Left ventricle myocardium inferior (tissue), 1 donor: ENCODE measurements at regions of chr7 and their contacts with region 1.

Region 1: GRCh38 chr7:2680792-2681490 is 7.1 kb upstream of the AMZ1 start:
- DNase-seq: peak; percentile 84
- H3K4me3 ChIP-seq: no peak overlapping the region
- H3K27ac ChIP-seq: no peak overlapping the region
- H3K4me1 ChIP-seq: peaks cover 4% of the 10 kb centered on the region
- H3K27me3 ChIP-seq: peaks cover 56% of the 10 kb centered on the region
- CTCF ChIP-seq: peak; percentile 84

Region 2: DNA sequence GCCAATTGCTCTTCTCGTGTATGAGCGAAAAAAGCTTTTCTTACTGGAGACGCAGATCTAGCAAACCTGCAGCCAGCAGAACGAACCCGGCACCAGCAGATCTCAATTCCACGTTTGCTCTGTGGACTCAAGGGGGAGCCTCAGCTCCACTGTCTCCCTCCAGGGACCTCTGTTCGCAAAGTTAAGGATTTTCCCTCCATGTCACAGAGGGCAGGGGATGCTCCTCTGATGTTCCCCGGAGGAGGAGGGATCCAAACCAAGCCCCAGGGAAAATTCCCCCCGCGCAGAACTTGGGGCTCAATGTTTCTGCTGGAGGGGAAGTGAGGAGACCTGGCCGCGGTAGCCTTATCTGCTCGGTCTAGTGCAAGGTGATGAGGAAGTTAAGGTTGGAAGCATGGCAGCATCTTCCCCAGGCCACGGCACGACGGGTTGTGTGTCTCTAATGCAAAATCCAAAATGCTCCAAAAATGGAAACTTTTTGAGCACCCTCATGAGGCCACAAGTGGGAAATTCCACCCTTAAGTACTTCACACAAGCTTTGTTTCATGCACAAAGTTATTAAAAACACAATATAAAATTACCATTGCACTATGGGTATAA is 113.2 kb before region 1 on chr7:
- intact Hi-C with region 1: loop called (anchors 5 kb)
- DNase-seq: peak; percentile 40
- H3K4me3 ChIP-seq: no peak overlapping the region
- H3K27ac ChIP-seq: no peak overlapping the region
- H3K4me1 ChIP-seq: peaks cover 15% of the 10 kb centered on the region
- H3K27me3 ChIP-seq: no peaks in the 10 kb centered on the region
- CTCF ChIP-seq: peak; percentile 76